ENCODE measurements at regions of chr13 and their contacts with region 1.

Region 1: GRCh38 chr13:26186118-26186870 is 35.8 kb downstream of the RNF6 start:
- DNase-seq: peak; percentile 87
- H3K4me3 Mint-ChIP-seq: peak overlapping the region; percentile 82
- H3K27ac Mint-ChIP-seq: peak overlapping the region; percentile 89
- H3K4me1 Mint-ChIP-seq: peaks cover 18% of the 10 kb centered on the region
- H3K27me3 Mint-ChIP-seq: no peaks in the 10 kb centered on the region

Region 2: GRCh38 chr13:25901460-25902376 is 284.6 kb before region 1 on chr13:
- intact Hi-C with region 1: loop called (anchors 10 kb)
- DNase-seq: peak; percentile 44
- H3K4me3 Mint-ChIP-seq: no peak overlapping the region
- H3K27ac Mint-ChIP-seq: no peak overlapping the region
- H3K4me1 Mint-ChIP-seq: peaks cover 30% of the 10 kb centered on the region
- H3K27me3 Mint-ChIP-seq: peaks cover 7% of the 10 kb centered on the region

Region 3: DNA sequence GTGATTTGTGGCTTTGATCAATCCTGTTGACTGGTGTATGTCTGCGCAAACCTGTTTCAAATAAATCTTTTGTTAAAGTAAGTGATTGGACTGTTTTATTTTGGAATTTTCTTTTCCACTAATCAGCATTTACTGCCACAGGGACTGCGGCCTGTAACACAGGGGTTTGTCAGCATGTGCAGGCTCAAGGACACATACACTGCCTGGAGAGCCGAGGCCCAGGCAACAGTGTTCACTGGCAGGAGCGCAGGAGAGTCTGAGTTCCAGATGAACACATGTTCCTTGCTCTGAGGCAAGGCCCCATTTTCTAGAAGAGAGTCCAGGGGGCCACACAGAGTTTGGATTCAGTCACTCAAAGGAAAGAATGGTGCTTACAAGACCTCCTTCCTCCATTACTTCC is 160.5 kb before region 1 on chr13:
- intact Hi-C with region 1: no loop called
- DNase-seq: no peak
- H3K4me3 Mint-ChIP-seq: no peak overlapping the region
- H3K27ac Mint-ChIP-seq: no peak overlapping the region
- H3K4me1 Mint-ChIP-seq: no peaks in the 10 kb centered on the region
- H3K27me3 Mint-ChIP-seq: peaks cover 17% of the 10 kb centered on the region

Region 4: DNA sequence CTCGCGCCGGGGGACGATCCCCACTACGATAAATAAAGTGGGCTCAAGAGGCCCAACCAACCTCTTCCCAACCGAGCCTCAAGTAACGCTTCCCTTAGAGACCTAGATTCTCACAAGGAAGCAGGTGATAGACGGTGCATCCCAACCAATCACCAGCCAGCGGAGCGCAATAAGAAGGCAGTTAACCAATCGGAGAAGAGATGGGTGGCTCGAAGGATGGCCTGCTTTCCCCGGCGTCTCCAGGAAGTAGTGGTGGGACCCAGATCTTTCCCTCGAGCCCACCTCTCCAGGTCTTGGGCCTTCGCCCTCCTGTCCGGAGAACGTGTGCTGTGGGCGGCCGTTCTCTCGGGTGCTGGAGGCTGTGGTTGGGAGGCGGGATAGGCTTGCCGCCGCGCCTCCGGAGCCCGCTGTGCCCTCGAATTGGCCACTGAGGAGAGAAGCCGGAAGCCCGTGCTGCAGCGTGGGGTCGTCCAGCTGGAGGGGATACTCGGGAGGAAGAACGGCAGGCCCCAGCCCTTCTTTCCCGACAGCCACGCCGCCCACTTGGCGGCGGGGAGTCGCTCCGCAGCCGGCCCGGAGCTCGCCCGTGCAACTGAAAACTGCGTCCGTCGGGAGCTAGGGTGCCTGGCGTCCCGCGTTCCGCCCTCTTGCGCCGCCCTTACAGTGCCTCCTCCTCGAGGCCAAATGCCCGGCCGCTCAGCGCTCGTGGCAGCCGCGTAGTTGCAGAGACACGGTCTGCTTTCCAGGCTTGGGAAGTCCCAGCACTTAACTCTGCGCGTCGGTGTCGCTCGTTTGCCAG is 35.6 kb after region 1 on chr13 and contains the start of gene RNF6:
- intact Hi-C with region 1: loop called (anchors 1 kb)
- DNase-seq: peak; percentile 85
- H3K4me3 Mint-ChIP-seq: peak within 1 kb of the TSS; percentile 100
- H3K27ac Mint-ChIP-seq: peak within 1 kb of the TSS; percentile 99
- H3K4me1 Mint-ChIP-seq: peaks cover 34% of the 10 kb centered on the region
- H3K27me3 Mint-ChIP-seq: peaks cover 5% of the 10 kb centered on the region
- total RNA-seq, gene RNF6: 44.3 and 48.0 TPM in 2 replicates

Region 5: GRCh38 chr13:26482451-26483197 is 296.3 kb after region 1 on chr13:
- intact Hi-C with region 1: loop called (anchors 1 kb)
- DNase-seq: peak; percentile 50
- H3K4me3 Mint-ChIP-seq: no peak overlapping the region
- H3K27ac Mint-ChIP-seq: no peak overlapping the region
- H3K4me1 Mint-ChIP-seq: peaks cover 4% of the 10 kb centered on the region
- H3K27me3 Mint-ChIP-seq: no peaks in the 10 kb centered on the region

Region 6: DNA sequence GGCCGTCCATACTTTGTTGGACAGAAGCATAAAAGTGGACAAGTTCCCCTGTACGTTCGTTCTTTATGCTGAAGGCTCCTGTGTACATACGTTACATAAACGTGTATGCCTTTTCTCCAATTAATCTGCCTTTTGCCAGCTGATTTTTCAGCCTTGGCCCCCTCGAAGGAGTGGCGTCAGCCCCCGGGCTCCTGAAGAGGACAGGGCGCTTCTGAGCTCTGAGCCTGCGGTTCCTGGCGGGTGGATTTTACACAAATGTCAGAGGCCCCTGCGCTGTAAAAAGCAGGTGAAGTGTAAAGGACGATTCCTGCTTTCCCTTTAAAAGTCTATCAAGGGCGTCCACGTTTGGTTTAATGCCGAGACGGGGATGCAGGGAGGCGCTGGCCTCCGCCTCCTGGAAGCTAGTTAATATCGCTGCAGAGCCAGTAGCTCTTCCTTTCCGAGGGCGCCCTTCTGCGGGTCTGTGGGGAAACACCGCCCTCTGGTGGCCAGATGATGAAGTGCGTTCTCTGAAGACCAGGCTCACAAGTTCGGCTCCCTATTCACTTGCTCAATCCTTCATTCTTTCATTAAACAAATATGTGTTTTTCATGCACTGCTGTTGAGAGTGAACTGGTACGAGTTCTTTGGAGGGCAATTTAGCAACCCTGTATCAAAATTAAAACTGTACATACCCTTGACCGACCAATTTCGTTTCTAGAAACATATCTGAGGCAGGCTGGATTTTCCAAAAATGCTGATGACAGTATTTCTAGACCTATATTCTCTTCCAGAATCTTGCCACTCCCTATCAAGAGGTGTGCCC is 512.3 kb after region 1 on chr13:
- intact Hi-C with region 1: loop called (anchors 1 kb)
- DNase-seq: peak; percentile 69
- H3K4me3 Mint-ChIP-seq: no peak overlapping the region
- H3K27ac Mint-ChIP-seq: no peak overlapping the region
- H3K4me1 Mint-ChIP-seq: peaks cover 2% of the 10 kb centered on the region
- H3K27me3 Mint-ChIP-seq: peaks cover 6% of the 10 kb centered on the region

Measured in activated T-helper 2 cell treated with anti-CD3 and anti-CD28 coated beads, Interferon-gamma antibody, Interleukin-2, Interleukin-4, amounts not matched to agents 10 μg/mL and 5 μg/mL and 100 μg/mL, durations not matched to agents 14 hours and 24 hours and 36 hours (primary cell).